ENCODE measurements at regions of chr14 and their contacts with region 1.

Region 1: GRCh38 chr14:56694609-56695008 is 115.0 kb downstream of the TMEM260 start:
- DNase-seq: no peak

Region 2: DNA sequence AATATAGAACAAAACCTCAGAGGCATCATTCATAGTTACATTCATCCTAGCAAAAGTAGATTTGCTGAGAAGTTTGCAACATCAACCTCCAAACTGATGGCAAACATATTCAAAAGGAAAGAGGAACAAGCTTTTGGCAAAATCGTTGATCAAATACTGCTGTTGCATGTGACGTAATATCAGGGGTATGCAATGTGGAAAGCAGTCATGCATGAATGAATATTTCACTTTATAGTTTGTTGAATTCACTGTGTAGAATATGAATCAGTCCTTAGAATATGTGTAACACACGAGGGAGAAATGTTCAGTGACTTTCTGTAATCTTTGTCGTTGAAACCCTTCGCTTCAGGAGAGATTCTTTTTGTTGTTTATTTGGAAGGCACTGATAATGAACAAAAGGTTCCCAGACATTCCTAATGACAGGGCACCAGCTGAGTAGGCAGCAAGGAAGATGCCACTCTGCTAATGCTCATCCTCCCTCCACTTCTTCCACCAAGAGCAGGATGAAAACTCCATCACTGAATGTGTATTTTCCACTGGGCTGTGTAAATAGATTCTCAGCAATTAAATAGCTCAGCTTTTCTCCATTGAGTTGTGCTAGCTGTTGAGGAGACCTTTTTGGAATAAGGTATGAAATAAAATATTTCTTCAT is 450.3 kb before region 1 on chr14:
- intact Hi-C with region 1: no loop called
- DNase-seq: no peak

Region 3: GRCh38 chr14:56678838-56679237 is 15.8 kb before region 1 on chr14:
- intact Hi-C with region 1: no loop called
- DNase-seq: no peak

Region 4: DNA sequence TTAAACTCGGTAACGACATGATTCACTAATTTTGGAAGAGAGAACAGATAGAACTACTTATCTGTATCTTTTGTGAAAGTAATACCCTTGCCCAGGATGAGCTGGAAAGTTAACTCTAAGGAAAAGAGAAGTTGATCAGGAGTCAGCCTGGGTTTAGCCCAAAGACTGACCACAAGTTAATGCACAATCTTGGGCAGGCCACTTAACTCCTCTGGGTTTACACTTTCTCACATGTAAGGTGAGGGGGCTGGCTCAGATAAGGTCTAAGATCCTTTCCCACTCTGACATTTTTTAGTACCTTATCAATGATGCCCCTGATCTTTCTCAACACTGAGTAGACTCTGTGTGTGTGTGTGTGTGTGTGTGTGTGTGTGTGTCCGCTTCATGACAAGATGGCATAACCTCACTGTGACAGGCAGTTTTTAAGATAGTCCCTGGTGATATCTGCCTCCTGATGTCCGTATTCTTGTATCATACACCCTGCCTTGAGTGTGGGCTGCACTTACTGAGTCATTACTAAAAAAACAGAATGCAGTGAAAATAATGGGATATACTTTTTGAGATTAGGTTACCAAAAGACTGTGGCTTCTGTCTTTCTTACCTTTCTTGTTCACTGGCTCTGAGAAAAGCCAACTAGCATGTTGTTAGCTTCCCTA is 855.3 kb after region 1 on chr14:
- intact Hi-C with region 1: loop called in 1 of 2 experiments (anchors 10 kb)
- DNase-seq: no peak

Measured in posterior vena cava (tissue), 2 donors.